ENCODE measurements at regions of chr16 and their contacts with region 1.

Region 1: DNA sequence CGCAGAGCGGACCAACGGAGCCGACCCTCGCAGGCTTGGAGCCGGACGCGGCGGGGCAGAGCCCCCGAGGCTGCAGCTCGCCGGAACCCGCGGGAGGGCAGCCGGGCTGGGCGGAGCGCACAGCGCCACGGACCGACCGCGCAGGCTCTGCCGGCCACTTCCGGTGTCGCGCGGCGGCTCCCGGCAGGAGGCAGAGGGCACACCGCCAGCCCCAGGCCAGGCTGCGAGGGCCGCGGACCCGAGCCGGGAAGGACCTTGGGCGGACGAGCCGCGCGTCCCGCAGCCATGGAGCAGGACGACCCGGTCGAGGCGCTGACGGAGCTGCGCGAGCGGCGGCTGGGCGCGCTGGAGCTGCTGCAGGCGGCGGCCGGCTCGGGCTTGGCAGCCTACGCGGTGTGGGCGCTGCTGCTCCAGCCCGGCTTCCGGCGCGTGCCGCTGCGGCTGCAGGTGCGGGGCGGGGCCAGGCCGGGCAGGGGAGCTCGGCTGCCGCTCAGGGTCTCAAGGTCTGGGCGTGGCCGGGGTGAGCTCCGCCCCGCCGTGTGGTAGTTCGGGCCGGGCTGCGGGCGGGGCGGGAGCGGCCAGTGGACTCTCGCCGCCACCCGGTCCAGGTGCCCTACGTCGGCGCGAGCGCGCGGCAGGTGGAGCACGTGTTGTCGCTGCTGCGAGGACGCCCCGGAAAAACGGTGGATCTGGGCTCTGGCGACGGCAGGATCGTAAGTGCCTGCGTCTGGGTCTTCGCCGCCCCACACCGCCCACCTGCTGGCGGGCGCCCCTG is at the start of gene ANTKMT:
- DNase-seq: peak; percentile 80 to 92
- ATAC-seq: peak; percentile 80
- H3K4me3 ChIP-seq: peak within 1 kb of the TSS; percentile 60 to 68
- H3K27ac ChIP-seq: peak within 1 kb of the TSS in 1 of 2 donors; percentile 48
- H3K4me1 ChIP-seq: no peaks in the 10 kb centered on the region
- H3K27me3 ChIP-seq: no peaks in the 10 kb centered on the region
- total RNA-seq, gene ANTKMT: 18.6 to 25.7 TPM

Region 2: GRCh38 chr16:740764-741505 is 19.8 kb after region 1 on chr16 and contains the start of gene CIAO3:
- intact Hi-C with region 1: loop called in 1 of 2 experiments (anchors 2 kb)
- DNase-seq: peak; percentile 92 to 96
- ATAC-seq: peak; percentile 97
- H3K4me3 ChIP-seq: peak within 1 kb of the TSS; percentile 71 to 92
- H3K27ac ChIP-seq: no peak within 1 kb of the TSS
- H3K4me1 ChIP-seq: no peaks in the 10 kb centered on the region
- H3K27me3 ChIP-seq: no peaks in the 10 kb centered on the region
- total RNA-seq, gene CIAO3: 21.8 to 22.4 TPM